B cell (primary cell): ENCODE measurements at regions of chr4 and their contacts with region 1.

Region 1: GRCh38 chr4:112523764-112524505 is 8.0 kb upstream of the NEUROG2 start:
- DNase-seq: peak; percentile 83
- ATAC-seq: peak; percentile 89
- H3K4me3 ChIP-seq: peak overlapping the region; percentile 33 to 63 (median 54)
- H3K4me3 Mint-ChIP-seq: peak overlapping the region; percentile 90
- H3K27ac ChIP-seq: no peak overlapping the region
- H3K27ac Mint-ChIP-seq: peak overlapping the region; percentile 28
- H3K4me1 ChIP-seq: peaks cover 36 to 44% of the 10 kb centered on the region in 2 donors
- H3K4me1 Mint-ChIP-seq: peaks cover 40% of the 10 kb centered on the region
- H3K27me3 ChIP-seq: peaks cover 0 to 52% (median 48%) of the 10 kb centered on the region in 4 experiments
- H3K27me3 Mint-ChIP-seq: peaks cover 65% of the 10 kb centered on the region
- CTCF ChIP-seq: peak; percentile 90

Region 2: GRCh38 chr4:112099701-112100297 is 424.1 kb before region 1 on chr4:
- CTCF ChIA-PET with region 1: interaction called, 75 read pairs
- POLR2A ChIA-PET with region 1: no interaction called
- intact Hi-C with region 1: loop called (anchors 1 kb)
- DNase-seq: peak; percentile 57
- ATAC-seq: peak; percentile 36
- H3K4me3 ChIP-seq: no peak overlapping the region
- H3K4me3 Mint-ChIP-seq: no peak overlapping the region
- H3K27ac ChIP-seq: no peak overlapping the region
- H3K27ac Mint-ChIP-seq: no peak overlapping the region
- H3K4me1 ChIP-seq: no peaks in the 10 kb centered on the region
- H3K4me1 Mint-ChIP-seq: no peaks in the 10 kb centered on the region
- H3K27me3 ChIP-seq: peaks cover 0 to 4% (median 0%) of the 10 kb centered on the region in 4 experiments
- H3K27me3 Mint-ChIP-seq: no peaks in the 10 kb centered on the region
- CTCF ChIP-seq: peak; percentile 78

Region 3: DNA sequence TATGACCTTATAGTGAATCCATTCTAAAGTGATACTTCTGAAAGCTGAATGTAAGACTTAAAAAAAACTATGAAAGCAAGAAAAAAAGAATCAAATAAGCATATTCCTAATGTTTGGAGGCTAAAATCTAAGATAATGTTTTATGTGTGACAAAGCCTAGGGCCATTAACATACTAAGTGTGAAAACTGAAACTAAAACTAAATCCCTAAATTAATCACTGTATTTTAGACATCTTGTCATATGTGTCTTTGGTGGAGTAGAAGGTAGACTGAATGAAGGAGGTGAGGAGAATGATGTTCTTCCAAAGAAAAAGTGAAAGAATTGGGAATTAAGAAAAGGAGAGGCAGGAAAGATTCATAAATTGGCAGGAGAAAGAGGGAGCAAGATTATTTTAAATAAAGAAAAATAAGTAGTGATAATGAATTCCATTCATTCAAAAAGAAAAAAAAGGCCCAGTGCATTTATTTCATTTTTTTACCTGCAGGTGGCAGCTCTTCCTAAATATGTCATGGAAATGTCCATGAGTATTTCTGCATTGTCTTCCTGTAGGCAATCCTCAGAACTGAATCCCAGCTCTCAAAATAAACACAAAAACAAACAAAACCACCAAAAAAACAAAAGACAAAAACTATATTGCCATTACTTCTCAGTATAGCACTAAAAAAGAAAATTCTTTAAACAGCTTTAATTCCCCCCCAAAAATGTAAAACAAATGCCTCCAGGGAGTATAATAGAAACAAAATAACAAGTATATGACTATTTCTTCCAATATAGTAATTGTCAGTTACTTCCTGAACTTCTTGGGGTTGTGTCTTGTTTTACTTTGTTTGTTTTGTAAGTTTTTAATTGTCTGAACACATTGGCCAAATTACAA is 309.3 kb before region 1 on chr4:
- CTCF ChIA-PET with region 1: interaction called, 36 read pairs
- POLR2A ChIA-PET with region 1: no interaction called
- intact Hi-C with region 1: loop called (anchors 1 kb)
- DNase-seq: peak; percentile 38
- ATAC-seq: no peak
- H3K4me3 ChIP-seq: no peak overlapping the region
- H3K4me3 Mint-ChIP-seq: no peak overlapping the region
- H3K27ac ChIP-seq: no peak overlapping the region
- H3K27ac Mint-ChIP-seq: no peak overlapping the region
- H3K4me1 ChIP-seq: no peaks in the 10 kb centered on the region
- H3K4me1 Mint-ChIP-seq: no peaks in the 10 kb centered on the region
- H3K27me3 ChIP-seq: no peaks in the 10 kb centered on the region
- H3K27me3 Mint-ChIP-seq: no peaks in the 10 kb centered on the region
- CTCF ChIP-seq: peak; percentile 70

Region 4: GRCh38 chr4:112502871-112503270 is 21.1 kb before region 1 on chr4:
- CTCF ChIA-PET with region 1: interaction called, 16 read pairs
- POLR2A ChIA-PET with region 1: no interaction called
- intact Hi-C with region 1: no loop called
- DNase-seq: no peak
- ATAC-seq: no peak
- H3K4me3 ChIP-seq: no peak overlapping the region
- H3K4me3 Mint-ChIP-seq: no peak overlapping the region
- H3K27ac ChIP-seq: no peak overlapping the region
- H3K27ac Mint-ChIP-seq: no peak overlapping the region
- H3K4me1 ChIP-seq: no peaks in the 10 kb centered on the region
- H3K4me1 Mint-ChIP-seq: no peaks in the 10 kb centered on the region
- H3K27me3 ChIP-seq: peaks cover 0 to 28% (median 12%) of the 10 kb centered on the region in 4 experiments
- H3K27me3 Mint-ChIP-seq: peaks cover 43% of the 10 kb centered on the region
- CTCF ChIP-seq: no peak

Region 5: DNA sequence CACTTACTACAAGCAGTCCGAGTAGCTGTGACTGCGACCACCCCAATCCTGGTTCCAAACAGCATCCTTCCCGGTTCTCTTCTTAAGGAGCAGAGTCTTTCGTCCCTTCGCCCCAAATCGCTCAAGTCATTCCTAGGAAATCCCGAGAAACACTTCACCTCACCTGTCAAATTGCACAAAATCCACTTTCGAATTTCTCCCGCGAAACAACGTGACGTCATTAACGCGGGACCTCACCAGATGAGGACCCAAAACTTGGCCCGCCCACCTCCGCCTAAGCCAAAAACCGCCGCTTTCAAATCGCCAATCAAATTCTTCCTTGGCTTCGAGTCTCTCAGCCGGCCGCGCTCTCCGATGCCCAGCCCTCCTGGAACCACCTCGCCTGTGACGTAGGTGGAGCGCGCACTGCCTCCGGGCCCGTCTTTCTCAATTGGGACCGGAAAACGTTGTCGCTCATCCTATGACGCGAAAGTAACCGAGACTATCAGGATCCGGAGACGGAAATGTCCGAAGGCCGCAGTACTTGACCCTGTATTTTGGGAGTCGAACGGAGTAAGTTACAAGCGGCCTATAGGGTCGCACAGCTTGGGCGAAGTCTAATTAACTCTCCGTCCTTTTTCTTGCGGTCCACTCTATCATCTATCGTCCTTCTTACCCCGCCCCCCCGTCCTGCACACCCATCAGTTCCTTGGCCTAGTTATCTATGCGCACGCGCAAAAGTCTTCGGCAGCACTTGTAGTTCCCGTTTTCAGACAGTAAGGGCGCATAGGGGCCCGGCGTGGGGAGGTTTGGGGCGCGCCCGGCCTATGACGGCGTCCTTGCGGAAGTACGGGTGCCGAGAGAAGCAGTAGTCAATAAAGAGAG is 113.0 kb after region 1 on chr4 and contains the starts of genes LARP7 and ZGRF1:
- CTCF ChIA-PET with region 1: no interaction called
- POLR2A ChIA-PET with region 1: no interaction called
- intact Hi-C with region 1: loop called (anchors 2 kb)
- DNase-seq: peak; percentile 99
- ATAC-seq: peak; percentile 86
- H3K4me3 ChIP-seq: peak within 1 kb of the TSS; percentile 54 to 94 (median 74)
- H3K4me3 Mint-ChIP-seq: no peak within 1 kb of the TSS
- H3K27ac ChIP-seq: peak within 1 kb of the TSS; percentile 84 to 97
- H3K27ac Mint-ChIP-seq: no peak within 1 kb of the TSS
- H3K4me1 ChIP-seq: peaks cover 13 to 19% of the 10 kb centered on the region in 2 donors
- H3K4me1 Mint-ChIP-seq: peaks cover 22% of the 10 kb centered on the region
- H3K27me3 ChIP-seq: no peaks in the 10 kb centered on the region
- H3K27me3 Mint-ChIP-seq: no peaks in the 10 kb centered on the region
- CTCF ChIP-seq: peak; percentile 92
- total RNA-seq, gene LARP7: 57.4 and 62.2 TPM in 2 replicates
- total RNA-seq, gene ZGRF1: 13.0 and 18.6 TPM in 2 replicates